CD4-positive, alpha-beta T cell (primary cell): ENCODE measurements at regions of chr20 and their contacts with region 1.

Region 1: GRCh38 chr20:53915446-53916172 is 154.8 kb downstream of the BCAS1 start:
- DNase-seq: peak; percentile 88 to 99 (median 94)
- ATAC-seq: peak; percentile 94
- H3K4me3 ChIP-seq: peak overlapping the region; percentile 68
- H3K4me3 Mint-ChIP-seq: peak overlapping the region; percentile 88
- H3K27ac ChIP-seq: peak overlapping the region in 1 of 2 donors; percentile 54
- H3K27ac Mint-ChIP-seq: peak overlapping the region; percentile 69
- H3K4me1 ChIP-seq: peaks cover 24% of the 10 kb centered on the region
- H3K4me1 Mint-ChIP-seq: peaks cover 21% of the 10 kb centered on the region
- H3K27me3 ChIP-seq: no peaks in the 10 kb centered on the region
- H3K27me3 Mint-ChIP-seq: no peaks in the 10 kb centered on the region
- CTCF ChIP-seq: peak; percentile 86

Region 2: GRCh38 chr20:53594068-53595017 is 321.3 kb before region 1 on chr20:
- CTCF ChIA-PET with region 1: interaction called, 3 read pairs
- POLR2A ChIA-PET with region 1: interaction called, 12 read pairs
- intact Hi-C with region 1: no loop called
- DNase-seq: peak; percentile 95 to 100 (median 98)
- ATAC-seq: peak; percentile 63
- H3K4me3 ChIP-seq: peak overlapping the region; percentile 75
- H3K4me3 Mint-ChIP-seq: peak overlapping the region; percentile 93
- H3K27ac ChIP-seq: peak overlapping the region; percentile 63 to 74
- H3K27ac Mint-ChIP-seq: peak overlapping the region; percentile 100
- H3K4me1 ChIP-seq: peaks cover 24% of the 10 kb centered on the region
- H3K4me1 Mint-ChIP-seq: peaks cover 73% of the 10 kb centered on the region
- H3K27me3 ChIP-seq: no peaks in the 10 kb centered on the region
- H3K27me3 Mint-ChIP-seq: no peaks in the 10 kb centered on the region
- CTCF ChIP-seq: no peak

Region 3: GRCh38 chr20:53708129-53708968 is 207.3 kb before region 1 on chr20:
- CTCF ChIA-PET with region 1: interaction called, 3 read pairs
- POLR2A ChIA-PET with region 1: interaction called, 5 read pairs
- intact Hi-C with region 1: loop called in 1 of 2 experiments (anchors 2 kb)
- DNase-seq: peak in 6 of 14 experiments; percentile 2 to 51 (median 26)
- ATAC-seq: peak; percentile 38
- H3K4me3 ChIP-seq: no peak overlapping the region
- H3K4me3 Mint-ChIP-seq: peak overlapping the region; percentile 69
- H3K27ac ChIP-seq: peak overlapping the region; percentile 52 to 57
- H3K27ac Mint-ChIP-seq: peak overlapping the region; percentile 92
- H3K4me1 ChIP-seq: peaks cover 45% of the 10 kb centered on the region
- H3K4me1 Mint-ChIP-seq: peaks cover 47% of the 10 kb centered on the region
- H3K27me3 ChIP-seq: no peaks in the 10 kb centered on the region
- H3K27me3 Mint-ChIP-seq: no peaks in the 10 kb centered on the region
- CTCF ChIP-seq: no peak

Region 4: DNA sequence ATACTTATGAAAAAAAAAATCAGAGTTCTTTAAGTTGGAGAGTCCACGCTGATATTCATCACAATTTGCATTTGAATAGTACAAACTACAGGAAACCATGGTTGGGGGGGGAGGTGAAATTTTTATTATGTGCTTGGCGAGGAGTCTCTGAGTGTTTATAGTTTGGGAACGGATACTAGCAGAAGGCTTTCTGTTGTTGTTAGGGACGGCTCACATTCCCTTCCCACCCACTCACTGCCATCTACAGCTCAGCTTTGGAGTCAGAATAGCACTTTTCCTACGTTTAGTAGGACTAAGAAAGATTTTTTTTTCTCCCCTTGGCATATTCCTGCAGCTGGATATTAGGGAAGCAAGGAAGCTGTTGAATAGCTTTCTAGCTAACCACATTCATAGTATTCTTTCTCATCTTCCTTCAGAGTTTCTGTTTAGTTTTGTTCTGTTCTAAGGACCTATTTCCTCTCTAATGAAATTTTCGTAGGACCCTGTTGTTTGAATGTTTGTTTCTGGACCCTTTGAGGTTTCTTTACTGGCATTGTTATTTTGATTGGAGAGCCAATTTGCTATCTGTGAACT is 86.8 kb before region 1 on chr20:
- CTCF ChIA-PET with region 1: no interaction called
- POLR2A ChIA-PET with region 1: no interaction called
- intact Hi-C with region 1: loop called in 1 of 2 experiments (anchors 5 kb)
- DNase-seq: peak in 1 of 14 experiments; percentile 50
- ATAC-seq: no peak
- H3K4me3 ChIP-seq: peak overlapping the region; percentile 36
- H3K4me3 Mint-ChIP-seq: peak overlapping the region; percentile 72
- H3K27ac ChIP-seq: peak overlapping the region in 1 of 2 donors; percentile 19
- H3K27ac Mint-ChIP-seq: peak overlapping the region; percentile 70
- H3K4me1 ChIP-seq: peaks cover 7% of the 10 kb centered on the region
- H3K4me1 Mint-ChIP-seq: peaks cover 58% of the 10 kb centered on the region
- H3K27me3 ChIP-seq: no peaks in the 10 kb centered on the region
- H3K27me3 Mint-ChIP-seq: no peaks in the 10 kb centered on the region
- CTCF ChIP-seq: no peak

Region 5: DNA sequence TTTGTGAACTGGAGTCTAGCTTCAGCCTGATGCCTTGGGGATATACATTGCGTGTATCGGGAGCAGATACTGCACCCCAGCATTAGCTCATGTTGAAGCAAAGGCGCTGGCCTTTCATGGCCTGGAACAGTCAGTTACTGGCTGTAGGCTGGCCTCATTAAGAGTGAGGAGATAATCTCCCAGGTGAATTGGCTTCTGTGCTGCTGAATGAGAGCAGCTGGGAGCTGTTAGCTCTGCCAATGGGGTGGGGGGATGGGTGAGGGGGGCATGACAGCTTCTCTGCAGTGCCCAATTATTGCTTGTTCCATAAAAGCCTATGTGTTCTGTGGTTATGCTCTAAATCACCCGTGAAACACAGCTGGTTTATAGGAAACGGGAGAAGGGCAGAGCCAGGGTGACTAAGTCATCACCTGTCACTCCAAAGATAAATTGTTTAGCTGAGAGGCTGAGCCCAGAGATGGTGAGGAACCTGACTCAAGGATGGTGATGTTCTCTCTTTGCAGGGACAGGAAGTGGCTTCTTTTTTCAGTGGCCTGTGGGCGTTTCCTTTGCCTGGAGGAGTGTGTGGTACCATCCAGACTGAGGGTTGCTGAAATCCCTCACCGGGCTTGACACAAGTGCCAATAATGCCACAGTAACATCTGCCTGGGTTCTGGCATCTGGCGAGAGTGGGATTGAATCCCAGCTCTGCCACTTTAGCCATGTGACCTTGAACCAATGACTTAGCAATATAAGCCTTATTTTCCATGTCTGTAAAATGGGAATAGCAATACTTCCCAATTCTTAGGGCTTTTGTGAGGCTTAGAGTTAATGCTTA is 16.1 kb before region 1 on chr20:
- CTCF ChIA-PET with region 1: interaction called, 10 read pairs
- POLR2A ChIA-PET with region 1: interaction called, 19 read pairs
- intact Hi-C with region 1: no loop called
- DNase-seq: peak; percentile 32 to 90 (median 63)
- ATAC-seq: peak; percentile 99
- H3K4me3 ChIP-seq: no peak overlapping the region
- H3K4me3 Mint-ChIP-seq: no peak overlapping the region
- H3K27ac ChIP-seq: peak overlapping the region in 1 of 2 donors; percentile 37
- H3K27ac Mint-ChIP-seq: peak overlapping the region; percentile 76
- H3K4me1 ChIP-seq: peaks cover 15% of the 10 kb centered on the region
- H3K4me1 Mint-ChIP-seq: peaks cover 40% of the 10 kb centered on the region
- H3K27me3 ChIP-seq: no peaks in the 10 kb centered on the region
- H3K27me3 Mint-ChIP-seq: no peaks in the 10 kb centered on the region
- CTCF ChIP-seq: no peak